ENCODE measurements at regions of chrX and their contacts with region 1.

Region 1: GRCh38 chrX:150200820-150201287 is 162.3 kb upstream of the MAMLD1 start:
- DNase-seq: peak; percentile 98
- ATAC-seq: peak; percentile 86
- H3K4me3 ChIP-seq: no peak overlapping the region
- H3K27ac ChIP-seq: peak overlapping the region; percentile 24; the same call in 1 of the 2 replicates
- H3K4me1 ChIP-seq: peaks cover 10% of the 10 kb centered on the region
- H3K27me3 ChIP-seq: no peaks in the 10 kb centered on the region
- CTCF ChIP-seq: no peak
- POLR2A ChIP-seq: no peak
- RAD21 ChIP-seq: no peak

Region 2: GRCh38 chrX:150036181-150037040 is 164.4 kb before region 1 on chrX:
- CTCF ChIA-PET with region 1: no interaction called
- POLR2A ChIA-PET with region 1: no interaction called
- dilution Hi-C with region 1: no loop called
- in situ Hi-C with region 1: no loop called
- intact Hi-C with region 1: loop called (anchors 5 kb)
- DNase-seq: peak; percentile 70
- ATAC-seq: peak; percentile 27; the same call in 1 of the 2 replicates
- H3K4me3 ChIP-seq: no peak overlapping the region
- H3K27ac ChIP-seq: peak overlapping the region; percentile 78; the same call in 1 of the 2 replicates
- H3K4me1 ChIP-seq: peaks cover 6% of the 10 kb centered on the region; the same call in 1 of the 2 replicates
- H3K27me3 ChIP-seq: no peaks in the 10 kb centered on the region
- CTCF ChIP-seq: no peak
- POLR2A ChIP-seq: no peak
- RAD21 ChIP-seq: no peak

Measured in IMR-90 (cell line).